ENCODE measurements at regions of chr10 and their contacts with region 1.

Region 1: GRCh38 chr10:120850911-120851865 is at the start of gene WDR11:
- DNase-seq: peak; percentile 90
- ATAC-seq: peak; percentile 100
- H3K4me3 ChIP-seq: peak within 1 kb of the TSS; percentile 73 to 94 (median 92)
- H3K27ac ChIP-seq: peak within 1 kb of the TSS; percentile 79
- H3K4me1 ChIP-seq: peaks cover 22% of the 10 kb centered on the region
- H3K27me3 ChIP-seq: no peaks in the 10 kb centered on the region; a peak in 1 of 5 replicates
- CTCF ChIP-seq: peak; percentile 33
- EP300 ChIP-seq: peak; percentile 49 to 72; a peak in 3 of 4 replicates
- POLR2A ChIP-seq: peak; percentile 82 to 91
- RAD21 ChIP-seq: peak; percentile 61; the same call in 1 of the 2 replicates
- total RNA-seq, gene WDR11: 38.0 and 40.3 TPM in 2 replicates

Region 2: GRCh38 chr10:120702032-120702431 is 149.2 kb before region 1 on chr10:
- CTCF ChIA-PET with region 1: no interaction called
- POLR2A ChIA-PET with region 1: no interaction called
- in situ Hi-C with region 1: no loop called
- intact Hi-C with region 1: no loop called
- DNase-seq: no peak
- ATAC-seq: no peak
- H3K4me3 ChIP-seq: no peak overlapping the region
- H3K27ac ChIP-seq: no peak overlapping the region
- H3K4me1 ChIP-seq: no peaks in the 10 kb centered on the region
- H3K27me3 ChIP-seq: peaks cover 0 to 8% of the 10 kb centered on the region in 2 experiments; a peak in 1 of 5 replicates
- CTCF ChIP-seq: no peak
- EP300 ChIP-seq: no peak
- POLR2A ChIP-seq: no peak
- RAD21 ChIP-seq: no peak

Region 3: GRCh38 chr10:120883071-120883470 is 31.9 kb after region 1 on chr10:
- CTCF ChIA-PET with region 1: no interaction called
- POLR2A ChIA-PET with region 1: no interaction called
- in situ Hi-C with region 1: no loop called
- intact Hi-C with region 1: no loop called
- DNase-seq: no peak
- ATAC-seq: no peak
- H3K4me3 ChIP-seq: no peak overlapping the region
- H3K27ac ChIP-seq: no peak overlapping the region
- H3K4me1 ChIP-seq: no peaks in the 10 kb centered on the region
- H3K27me3 ChIP-seq: no peaks in the 10 kb centered on the region
- CTCF ChIP-seq: no peak
- EP300 ChIP-seq: no peak
- POLR2A ChIP-seq: no peak
- RAD21 ChIP-seq: no peak

Region 4: GRCh38 chr10:120897343-120897742 is 46.2 kb after region 1 on chr10:
- CTCF ChIA-PET with region 1: no interaction called
- POLR2A ChIA-PET with region 1: no interaction called
- in situ Hi-C with region 1: no loop called
- intact Hi-C with region 1: loop called (anchors 1 kb)
- DNase-seq: peak; percentile 44
- ATAC-seq: peak; percentile 60
- H3K4me3 ChIP-seq: no peak overlapping the region
- H3K27ac ChIP-seq: no peak overlapping the region
- H3K4me1 ChIP-seq: peaks cover 10% of the 10 kb centered on the region
- H3K27me3 ChIP-seq: no peaks in the 10 kb centered on the region
- CTCF ChIP-seq: no peak
- EP300 ChIP-seq: no peak
- POLR2A ChIP-seq: no peak
- RAD21 ChIP-seq: no peak

Region 5: DNA sequence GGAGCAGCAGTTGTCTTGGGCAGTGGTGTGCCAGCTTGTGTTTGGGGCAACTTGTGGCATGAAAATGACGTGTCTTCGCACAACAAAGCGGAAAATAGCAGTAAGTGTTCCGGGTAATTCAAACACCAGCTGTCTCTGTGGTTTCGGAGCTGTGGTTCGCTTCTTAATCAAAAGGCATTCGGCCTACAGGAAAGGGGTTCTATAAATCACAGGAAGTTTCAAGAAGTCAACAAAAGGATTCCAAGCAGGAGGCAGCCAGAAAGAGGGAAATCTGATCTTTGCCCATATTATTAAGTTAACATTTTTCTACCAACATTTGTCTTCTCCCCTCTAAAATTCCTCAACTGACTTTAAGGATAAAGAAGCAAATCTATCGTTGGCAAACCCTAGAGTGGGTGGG is 393.6 kb after region 1 on chr10:
- CTCF ChIA-PET with region 1: no interaction called
- POLR2A ChIA-PET with region 1: no interaction called
- in situ Hi-C with region 1: no loop called
- intact Hi-C with region 1: no loop called
- DNase-seq: no peak
- ATAC-seq: no peak
- H3K4me3 ChIP-seq: no peak overlapping the region
- H3K27ac ChIP-seq: no peak overlapping the region
- H3K4me1 ChIP-seq: no peaks in the 10 kb centered on the region
- H3K27me3 ChIP-seq: no peaks in the 10 kb centered on the region; a peak in 2 of 5 replicates
- CTCF ChIP-seq: no peak
- EP300 ChIP-seq: no peak
- POLR2A ChIP-seq: no peak
- RAD21 ChIP-seq: no peak

Measured in HepG2 (cell line).